CD8-positive, alpha-beta memory T cell (primary cell): ENCODE measurements at regions of chr4 and their contacts with region 1.

Region 1: GRCh38 chr4:15756361-15756861 is 21.7 kb upstream of the CD38 start:
- DNase-seq: peak; percentile 58 to 90 (median 81)
- H3K4me3 ChIP-seq: peak overlapping the region; percentile 37
- H3K4me3 Mint-ChIP-seq: peak overlapping the region; percentile 39 to 85 (median 70)
- H3K27ac ChIP-seq: no peak overlapping the region
- H3K27ac Mint-ChIP-seq: peak overlapping the region; percentile 12 to 92 (median 90)
- H3K4me1 ChIP-seq: peaks cover 44% of the 10 kb centered on the region
- H3K4me1 Mint-ChIP-seq: peaks cover 42 to 56% (median 50%) of the 10 kb centered on the region in 3 donors
- H3K27me3 ChIP-seq: no peaks in the 10 kb centered on the region
- H3K27me3 Mint-ChIP-seq: no peaks in the 10 kb centered on the region

Region 2: DNA sequence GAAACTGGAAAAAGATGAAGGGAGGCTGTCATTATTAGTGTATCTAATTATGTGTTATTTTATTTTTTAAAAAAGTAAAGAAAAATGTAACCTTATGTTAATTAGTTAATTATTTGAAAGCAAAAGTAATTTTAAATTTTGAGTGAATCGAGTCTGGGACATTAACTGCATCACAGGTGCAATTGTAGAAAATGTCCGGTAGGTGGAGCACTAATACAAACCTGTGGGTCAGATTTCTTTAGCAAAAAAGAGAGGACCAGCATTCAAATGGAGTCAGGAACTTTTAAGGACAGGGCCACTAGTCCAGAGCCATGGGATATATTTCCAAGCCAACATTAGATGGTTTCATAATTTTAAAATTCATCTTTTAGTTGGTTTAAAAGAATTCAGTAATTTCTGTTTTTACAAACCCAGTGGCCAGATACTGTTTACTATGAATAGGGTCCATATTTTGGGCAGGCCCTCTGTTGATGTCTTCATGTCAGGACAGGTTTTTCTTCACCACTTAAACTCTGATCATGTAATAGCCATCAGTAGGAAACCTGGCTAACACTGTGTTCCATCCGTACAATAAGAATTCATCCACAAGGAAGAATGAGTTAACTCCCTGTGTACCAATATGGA is 26.4 kb before region 1 on chr4:
- CTCF ChIA-PET with region 1: interaction called, 6 read pairs
- POLR2A ChIA-PET with region 1: interaction called, 11 read pairs
- DNase-seq: peak in 3 of 5 donors; percentile 6 to 55 (median 44)
- H3K4me3 ChIP-seq: no peak overlapping the region
- H3K4me3 Mint-ChIP-seq: no peak overlapping the region
- H3K27ac ChIP-seq: no peak overlapping the region
- H3K27ac Mint-ChIP-seq: peak overlapping the region in 2 of 8 donors; percentile 10 to 40
- H3K4me1 ChIP-seq: no peaks in the 10 kb centered on the region
- H3K4me1 Mint-ChIP-seq: peaks cover 4 to 13% (median 10%) of the 10 kb centered on the region in 3 donors
- H3K27me3 ChIP-seq: no peaks in the 10 kb centered on the region
- H3K27me3 Mint-ChIP-seq: peaks cover 2 to 7% of the 10 kb centered on the region in 2 donors

Region 3: DNA sequence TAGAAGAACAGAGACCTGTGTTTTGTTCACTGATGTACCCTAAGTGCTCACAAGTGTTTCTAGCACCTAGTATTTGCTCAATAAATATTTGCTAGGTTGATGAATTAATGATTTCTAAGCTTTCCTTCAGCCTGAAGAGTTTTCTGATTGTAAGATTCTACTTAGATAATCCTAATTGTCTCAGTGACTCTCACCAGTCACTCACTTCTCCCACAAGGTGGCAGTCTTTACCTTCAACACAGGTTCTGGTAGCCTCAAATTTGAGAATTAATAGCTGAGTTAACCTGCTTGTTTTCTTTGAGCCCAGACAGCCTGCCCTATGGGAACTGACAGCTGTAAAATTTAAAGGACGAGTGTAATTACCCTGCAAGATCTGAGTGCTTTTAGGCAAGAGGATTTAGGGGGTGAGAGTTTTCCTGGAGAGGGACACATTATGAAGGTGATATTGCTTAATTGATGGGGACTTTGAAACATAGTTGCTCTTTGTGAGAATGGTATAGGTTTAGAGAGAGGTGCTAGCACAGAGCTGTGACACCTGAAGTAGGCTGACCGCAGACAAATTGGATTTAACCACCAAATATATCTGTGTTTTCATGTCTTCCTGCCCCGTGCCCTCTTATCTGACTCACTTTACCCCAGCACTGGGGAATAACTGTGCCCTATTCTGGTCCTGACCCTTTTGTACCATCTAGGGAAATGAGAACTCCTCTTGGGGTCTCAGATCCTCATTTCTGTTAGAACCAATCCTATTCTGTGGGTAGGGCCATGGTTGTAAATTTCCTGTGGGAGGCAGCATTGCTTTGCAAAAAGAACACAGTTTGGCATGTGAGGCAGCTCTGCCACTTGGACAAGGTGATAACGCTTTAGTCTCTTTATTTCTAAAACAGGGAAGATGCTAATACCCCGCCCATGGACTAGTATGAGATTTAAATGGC is 49.4 kb after region 1 on chr4:
- CTCF ChIA-PET with region 1: interaction called, 15 read pairs
- POLR2A ChIA-PET with region 1: interaction called, 3 read pairs
- DNase-seq: peak in 3 of 5 donors; percentile 35 to 54 (median 47)
- H3K4me3 ChIP-seq: no peak overlapping the region
- H3K4me3 Mint-ChIP-seq: no peak overlapping the region
- H3K27ac ChIP-seq: no peak overlapping the region
- H3K27ac Mint-ChIP-seq: no peak overlapping the region
- H3K4me1 ChIP-seq: no peaks in the 10 kb centered on the region
- H3K4me1 Mint-ChIP-seq: peaks cover 12 to 25% (median 16%) of the 10 kb centered on the region in 3 donors
- H3K27me3 ChIP-seq: no peaks in the 10 kb centered on the region
- H3K27me3 Mint-ChIP-seq: no peaks in the 10 kb centered on the region